ENCODE measurements at regions of chr10 and their contacts with region 1.

Region 1: GRCh38 chr10:6399231-6399741 is 180.8 kb downstream of the PRKCQ start:
- DNase-seq: no peak
- H3K4me3 ChIP-seq: no peak overlapping the region
- H3K27ac ChIP-seq: no peak overlapping the region
- H3K4me1 ChIP-seq: peaks cover 14% of the 10 kb centered on the region
- H3K27me3 ChIP-seq: peaks cover 20% of the 10 kb centered on the region

Region 2: GRCh38 chr10:6108603-6109443 is 290.5 kb before region 1 on chr10:
- in situ Hi-C with region 1: loop called (anchors 10 kb)
- DNase-seq: peak; percentile 64
- H3K4me3 ChIP-seq: no peak overlapping the region
- H3K27ac ChIP-seq: no peak overlapping the region
- H3K4me1 ChIP-seq: no peaks in the 10 kb centered on the region
- H3K27me3 ChIP-seq: no peaks in the 10 kb centered on the region

Region 3: GRCh38 chr10:6202684-6203330 is 196.5 kb before region 1 on chr10 and contains the start of gene PFKFB3:
- in situ Hi-C with region 1: loop called (anchors 10 kb)
- DNase-seq: peak; percentile 98
- H3K4me3 ChIP-seq: peak within 1 kb of the TSS; percentile 99
- H3K27ac ChIP-seq: peak within 1 kb of the TSS; percentile 87
- H3K4me1 ChIP-seq: peaks cover 17% of the 10 kb centered on the region
- H3K27me3 ChIP-seq: no peaks in the 10 kb centered on the region
- total RNA-seq, gene PFKFB3: 14.5 and 23.6 TPM in 2 replicates

Region 4: DNA sequence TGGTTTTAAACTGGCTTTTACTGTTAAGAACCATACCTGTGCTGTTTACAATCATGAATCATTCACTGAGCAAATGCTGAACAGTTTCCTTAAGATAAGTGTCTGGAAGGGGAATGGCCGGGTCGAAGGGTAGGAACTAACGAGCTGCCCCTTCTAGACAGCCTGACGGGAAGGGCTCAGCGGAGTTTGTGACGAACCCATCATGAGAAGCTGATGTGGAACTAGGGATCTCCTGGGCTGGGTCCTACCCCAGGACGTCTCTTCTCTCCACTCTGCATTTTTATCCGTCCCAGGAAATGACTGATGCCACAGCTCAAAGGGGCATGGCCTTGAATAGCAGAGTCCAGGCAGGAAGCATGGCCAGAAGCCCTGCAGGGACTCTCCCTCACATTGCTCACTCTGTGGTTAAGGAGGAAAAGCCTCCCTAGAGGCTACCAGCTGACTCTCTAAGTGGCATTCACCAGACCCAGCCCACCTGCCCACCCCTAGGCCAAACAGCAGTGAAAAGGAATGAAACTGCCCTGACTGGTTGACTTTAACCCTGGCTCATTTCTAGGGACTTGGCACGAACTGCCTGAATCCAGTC is 84.6 kb before region 1 on chr10:
- in situ Hi-C with region 1: no loop called
- DNase-seq: no peak
- H3K4me3 ChIP-seq: no peak overlapping the region
- H3K27ac ChIP-seq: no peak overlapping the region
- H3K4me1 ChIP-seq: no peaks in the 10 kb centered on the region
- H3K27me3 ChIP-seq: peaks cover 32% of the 10 kb centered on the region

Region 5: DNA sequence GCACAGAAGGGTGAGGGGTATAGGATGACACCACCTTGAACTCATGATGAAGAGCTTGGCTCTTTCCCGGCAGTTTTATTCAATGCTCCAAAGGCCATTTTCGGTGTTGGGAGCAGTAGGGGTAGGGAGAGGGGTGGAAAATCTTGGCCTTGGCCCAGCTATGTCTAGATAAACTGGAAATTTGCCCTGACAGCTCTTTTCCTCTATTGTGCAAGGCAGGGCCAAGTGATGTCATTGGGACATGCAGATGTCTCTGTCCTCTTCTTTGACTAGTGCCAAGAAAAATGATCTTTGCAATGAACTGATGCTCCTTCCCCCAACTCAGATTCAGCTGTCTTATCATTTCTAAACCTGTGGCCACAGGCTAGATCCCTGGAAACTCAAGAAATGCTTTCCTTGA is 208.5 kb after region 1 on chr10:
- in situ Hi-C with region 1: no loop called
- DNase-seq: no peak
- H3K4me3 ChIP-seq: no peak overlapping the region
- H3K27ac ChIP-seq: no peak overlapping the region
- H3K4me1 ChIP-seq: no peaks in the 10 kb centered on the region
- H3K27me3 ChIP-seq: peaks cover 11% of the 10 kb centered on the region; the same call in 1 of the 2 replicates